ENCODE measurements at regions of chr6 and their contacts with region 1.

Region 1: DNA sequence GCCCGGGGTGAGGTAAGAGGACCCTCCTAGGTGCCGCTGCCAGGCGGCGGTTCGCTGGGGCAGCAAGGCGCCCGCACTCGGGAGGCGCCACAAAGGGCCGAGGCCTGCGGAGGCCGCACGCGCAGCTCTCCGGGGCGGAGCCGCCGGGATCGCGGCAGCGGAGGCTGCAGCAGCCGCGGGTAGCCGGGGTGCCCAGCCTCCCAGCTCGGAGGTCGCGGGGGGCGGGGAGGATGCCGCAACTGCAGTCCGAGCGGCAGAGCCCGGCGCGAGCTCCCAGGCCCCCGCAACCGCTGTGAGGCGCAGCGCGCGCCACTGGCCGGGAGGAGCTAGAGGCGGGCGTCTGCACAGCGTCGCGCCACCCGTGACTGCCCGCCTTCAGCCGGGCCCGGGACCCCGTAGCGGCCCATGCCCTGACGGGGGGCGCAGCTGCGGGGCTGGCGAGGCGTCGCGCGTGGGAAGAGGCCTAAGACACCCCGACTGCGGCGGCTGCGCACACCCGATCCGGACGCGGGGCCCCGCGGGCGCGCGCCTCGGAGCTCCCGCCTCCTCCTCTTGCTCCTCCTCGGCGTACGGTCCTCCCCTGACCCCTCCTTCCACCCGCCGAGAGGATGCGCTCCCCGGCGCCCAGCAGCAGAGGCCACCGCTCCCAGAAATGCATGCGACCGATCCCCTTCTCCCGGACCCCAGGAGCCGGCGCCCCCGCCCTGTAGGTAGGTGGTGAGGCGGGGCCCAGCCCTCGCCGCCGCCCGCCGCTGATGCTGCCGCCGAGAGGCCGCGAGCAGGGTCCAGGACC is at the start of gene NCOA7:
- DNase-seq: peak; percentile 83 to 91
- ATAC-seq: peak; percentile 86 to 92 (median 92)
- H3K4me3 ChIP-seq: peak within 1 kb of the TSS; percentile 89
- H3K27ac ChIP-seq: peak within 1 kb of the TSS; percentile 91
- H3K4me1 ChIP-seq: peaks cover 13% of the 10 kb centered on the region
- H3K27me3 ChIP-seq: no peaks in the 10 kb centered on the region
- CTCF ChIP-seq: no peak
- total RNA-seq, gene NCOA7: 8.2 to 22.5 (median 13.2) TPM

Region 2: DNA sequence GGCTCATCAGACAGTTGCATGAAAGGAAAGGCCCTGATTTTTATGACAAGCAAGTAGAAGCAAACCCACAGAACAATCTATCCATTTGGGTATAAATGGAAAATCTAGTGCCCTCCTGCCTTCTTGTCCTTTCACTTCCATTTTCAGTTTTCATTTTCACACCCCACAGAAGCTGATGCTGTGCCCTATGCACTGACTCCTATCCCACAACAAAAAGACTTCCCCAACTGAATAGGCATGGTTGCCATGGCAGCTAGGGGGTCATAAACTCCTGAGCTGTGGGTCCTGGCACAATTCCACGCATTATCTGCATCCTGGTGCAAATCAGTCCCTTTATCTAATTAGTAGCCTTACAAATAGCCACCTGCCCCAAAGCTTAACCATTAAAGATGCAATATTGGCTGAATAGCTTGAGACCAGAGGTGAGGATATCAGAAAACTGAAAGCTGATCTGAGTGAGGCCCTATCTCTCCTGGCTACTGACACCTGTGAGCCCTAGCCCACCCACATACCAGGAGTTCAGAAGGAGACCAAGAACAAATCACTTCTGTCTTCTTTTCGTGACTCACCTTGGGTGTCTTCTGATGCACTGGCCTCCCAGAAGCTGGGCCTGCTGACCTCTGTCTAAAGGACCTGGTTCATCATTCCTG is 76.0 kb before region 1 on chr6:
- intact Hi-C with region 1: no loop called
- DNase-seq: no peak
- ATAC-seq: no peak
- H3K4me3 ChIP-seq: no peak overlapping the region
- H3K27ac ChIP-seq: no peak overlapping the region
- H3K4me1 ChIP-seq: no peaks in the 10 kb centered on the region
- H3K27me3 ChIP-seq: no peaks in the 10 kb centered on the region
- CTCF ChIP-seq: no peak

Region 3: GRCh38 chr6:125821825-125822281 is 31.3 kb after region 1 on chr6:
- intact Hi-C with region 1: no loop called
- DNase-seq: no peak
- ATAC-seq: peak in 1 of 4 donors; percentile 40
- H3K4me3 ChIP-seq: no peak overlapping the region
- H3K27ac ChIP-seq: no peak overlapping the region
- H3K4me1 ChIP-seq: no peaks in the 10 kb centered on the region
- H3K27me3 ChIP-seq: no peaks in the 10 kb centered on the region
- CTCF ChIP-seq: no peak

Region 4: DNA sequence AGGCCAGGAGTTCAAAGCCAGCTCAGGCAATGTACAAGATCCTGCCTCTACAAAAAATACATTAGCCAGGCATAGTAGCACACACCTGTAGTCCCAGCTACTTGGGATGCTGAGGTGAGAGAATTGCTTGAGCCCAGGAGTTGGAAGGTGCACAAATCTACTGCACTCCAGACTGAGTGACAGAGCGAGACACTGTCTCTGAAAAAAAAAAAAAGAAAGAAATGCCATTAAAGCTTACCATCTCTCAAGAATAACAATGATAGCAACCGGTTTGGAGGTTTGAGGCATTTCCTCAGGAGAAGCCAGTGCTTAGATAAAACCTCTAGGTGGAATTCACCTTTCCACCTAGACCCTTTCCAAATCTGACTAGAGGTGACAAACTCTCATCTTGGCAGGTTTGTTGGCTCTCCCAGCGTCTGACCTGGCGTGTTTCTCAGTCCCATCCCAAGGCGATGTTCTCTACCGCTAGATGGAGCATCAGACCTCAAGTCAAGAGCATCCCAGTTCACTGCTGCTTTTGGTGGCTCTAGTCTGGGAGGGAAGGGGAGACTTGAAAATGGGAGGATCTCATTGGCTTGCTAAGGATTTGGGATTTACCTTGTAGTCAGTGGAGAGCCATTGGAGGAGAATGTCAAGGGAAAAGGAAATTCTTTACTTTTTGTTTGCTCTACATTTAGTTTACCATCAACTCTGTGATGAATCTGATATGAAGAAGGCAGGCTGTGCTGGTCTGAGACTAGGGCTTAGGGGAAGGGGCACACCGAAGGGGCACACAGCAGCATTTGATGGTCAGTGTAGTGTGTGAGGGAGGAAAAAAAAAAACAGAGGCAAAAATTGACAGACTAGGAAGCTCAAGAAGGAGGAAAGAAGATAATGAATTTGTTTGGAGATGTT is 68.1 kb after region 1 on chr6:
- intact Hi-C with region 1: loop called in 1 of 2 experiments (anchors 5 kb)
- DNase-seq: no peak
- ATAC-seq: peak; percentile 48 to 84 (median 69)
- H3K4me3 ChIP-seq: no peak overlapping the region
- H3K27ac ChIP-seq: no peak overlapping the region
- H3K4me1 ChIP-seq: no peaks in the 10 kb centered on the region
- H3K27me3 ChIP-seq: no peaks in the 10 kb centered on the region
- CTCF ChIP-seq: peak; percentile 68

Region 5: DNA sequence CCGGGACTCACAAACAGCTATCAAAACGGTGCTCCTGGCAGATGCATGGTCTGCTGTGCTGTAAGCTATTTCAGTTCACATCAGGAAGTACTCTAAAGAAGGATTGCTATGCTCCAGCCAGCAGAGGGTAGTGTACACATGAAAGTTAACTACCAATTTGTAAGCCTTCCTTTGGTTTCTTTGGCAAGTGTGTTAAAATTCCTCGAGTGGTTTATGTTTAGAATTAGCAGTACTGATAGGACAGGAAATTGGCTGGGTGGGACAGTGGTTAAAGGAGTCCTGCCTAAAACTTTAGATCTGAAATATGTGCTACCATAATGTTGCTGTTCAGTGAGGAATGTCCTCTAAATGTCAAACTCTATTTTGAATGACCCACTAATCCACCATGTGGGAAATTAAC is 243.1 kb after region 1 on chr6:
- intact Hi-C with region 1: no loop called
- DNase-seq: no peak
- ATAC-seq: peak; percentile 76 to 94 (median 88)
- H3K4me3 ChIP-seq: no peak overlapping the region
- H3K27ac ChIP-seq: no peak overlapping the region
- H3K4me1 ChIP-seq: no peaks in the 10 kb centered on the region
- H3K27me3 ChIP-seq: no peaks in the 10 kb centered on the region
- CTCF ChIP-seq: peak; percentile 60